HepG2 (cell line): ENCODE measurements at regions of chr3 and their contacts with region 1.

Region 1: DNA sequence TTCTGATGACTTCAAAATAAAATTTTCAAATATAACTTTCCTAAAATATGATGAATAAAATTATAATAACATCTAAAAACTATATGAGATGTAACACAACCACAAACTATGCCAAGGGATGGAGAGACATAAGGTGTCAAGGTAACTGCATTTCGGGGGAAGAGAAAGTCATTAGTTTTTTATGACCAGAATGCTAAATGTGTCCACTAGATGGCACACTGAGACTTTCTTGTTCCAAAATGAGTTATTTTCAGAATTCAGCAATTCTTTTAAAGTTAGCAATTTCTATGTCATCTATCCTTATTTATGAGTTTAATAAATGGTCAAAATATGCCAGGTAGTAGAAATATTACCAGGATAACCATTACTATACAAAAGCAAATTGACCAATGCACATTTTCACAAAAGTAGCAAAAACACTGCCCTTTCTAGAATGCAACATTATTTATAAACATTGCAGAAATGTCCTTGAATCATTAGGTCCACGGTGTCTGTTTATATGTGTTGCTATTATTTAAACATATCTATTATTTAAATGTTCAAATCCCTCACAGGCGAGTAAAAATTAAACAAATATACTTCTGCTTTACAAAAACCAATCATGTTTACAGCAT is 374.2 kb downstream of the PLCL2 start:
- DNase-seq: peak; percentile 14
- ATAC-seq: no peak
- H3K4me3 ChIP-seq: no peak overlapping the region
- H3K27ac ChIP-seq: no peak overlapping the region
- H3K4me1 ChIP-seq: no peaks in the 10 kb centered on the region
- H3K27me3 ChIP-seq: no peaks in the 10 kb centered on the region; a peak in 1 of 5 replicates
- CTCF ChIP-seq: peak; percentile 68
- EP300 ChIP-seq: no peak
- POLR2A ChIP-seq: no peak
- RAD21 ChIP-seq: 0 out of 2 replicates have a peak, but pooled peaks have one; percentile 14

Region 2: DNA sequence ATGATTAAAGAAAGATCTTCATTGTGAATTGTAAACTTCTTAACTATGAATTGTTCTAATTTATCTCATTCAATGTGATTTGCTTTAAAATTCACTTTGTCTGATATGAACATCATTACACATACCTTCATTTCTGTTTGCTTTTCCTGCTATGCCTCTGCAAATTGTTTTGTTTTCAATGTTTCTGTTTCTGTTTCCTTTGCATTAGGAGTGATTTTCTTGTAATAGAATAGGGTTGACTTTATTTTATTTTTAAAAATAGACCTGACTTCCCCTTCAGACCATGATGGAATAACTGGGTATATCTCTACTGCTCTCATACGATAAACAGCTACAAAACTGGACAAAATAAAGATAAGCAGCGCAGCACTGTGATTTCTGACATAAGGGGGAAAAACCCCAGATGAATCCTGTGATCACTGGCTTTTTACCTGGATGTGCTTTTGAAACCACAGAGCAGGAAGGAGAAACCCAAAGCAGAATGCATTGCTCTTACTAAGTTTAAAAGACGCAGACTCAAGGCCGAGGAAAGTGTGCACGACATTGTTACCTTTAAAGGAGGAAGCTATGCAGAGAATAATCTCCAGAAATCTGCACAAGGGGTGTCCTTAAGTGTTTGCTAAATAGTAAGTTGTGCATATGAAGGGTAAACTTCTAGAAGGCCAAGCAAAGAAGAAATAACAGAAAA is 63.3 kb after region 1 on chr3:
- CTCF ChIA-PET with region 1: no interaction called
- POLR2A ChIA-PET with region 1: no interaction called
- in situ Hi-C with region 1: no loop called
- intact Hi-C with region 1: loop called (anchors 1 kb)
- DNase-seq: no peak
- ATAC-seq: no peak
- H3K4me3 ChIP-seq: no peak overlapping the region
- H3K27ac ChIP-seq: no peak overlapping the region
- H3K4me1 ChIP-seq: no peaks in the 10 kb centered on the region
- H3K27me3 ChIP-seq: no peaks in the 10 kb centered on the region
- CTCF ChIP-seq: no peak
- EP300 ChIP-seq: no peak
- POLR2A ChIP-seq: no peak
- RAD21 ChIP-seq: no peak

Region 3: DNA sequence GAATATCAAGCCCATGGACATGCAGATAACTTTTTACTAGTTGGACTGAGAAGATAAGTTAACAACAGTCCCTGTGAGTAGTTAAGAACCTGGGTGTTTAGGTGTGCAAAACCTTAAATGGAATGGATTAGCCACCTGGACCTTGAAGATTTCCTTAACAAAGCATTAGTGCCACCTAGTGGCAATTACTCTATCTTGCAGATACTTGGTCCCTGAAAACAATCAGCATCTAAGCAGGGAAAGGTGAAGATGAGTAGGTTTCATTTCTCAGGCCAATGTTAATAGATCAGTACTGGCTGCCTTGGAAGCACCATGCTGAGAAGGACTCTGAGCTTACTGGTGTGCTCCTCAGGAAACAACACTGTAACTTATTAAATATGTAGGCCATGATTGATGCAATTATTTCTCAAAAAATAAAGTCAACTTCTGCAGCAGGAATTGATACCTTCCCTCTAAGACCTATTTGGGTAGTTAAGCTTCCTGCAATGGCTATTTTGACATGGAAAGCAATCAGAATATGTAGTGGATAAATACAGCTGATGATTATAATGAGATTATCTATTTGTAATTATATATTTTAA is 154.1 kb after region 1 on chr3:
- CTCF ChIA-PET with region 1: interaction called, 14 read pairs
- POLR2A ChIA-PET with region 1: no interaction called
- in situ Hi-C with region 1: loop called (anchors 5 kb)
- intact Hi-C with region 1: loop called (anchors 1 kb)
- DNase-seq: peak; percentile 64
- ATAC-seq: peak; percentile 82
- H3K4me3 ChIP-seq: no peak overlapping the region
- H3K27ac ChIP-seq: no peak overlapping the region
- H3K4me1 ChIP-seq: no peaks in the 10 kb centered on the region
- H3K27me3 ChIP-seq: no peaks in the 10 kb centered on the region
- CTCF ChIP-seq: peak; percentile 84
- EP300 ChIP-seq: no peak
- POLR2A ChIP-seq: no peak
- RAD21 ChIP-seq: peak; percentile 62

Region 4: DNA sequence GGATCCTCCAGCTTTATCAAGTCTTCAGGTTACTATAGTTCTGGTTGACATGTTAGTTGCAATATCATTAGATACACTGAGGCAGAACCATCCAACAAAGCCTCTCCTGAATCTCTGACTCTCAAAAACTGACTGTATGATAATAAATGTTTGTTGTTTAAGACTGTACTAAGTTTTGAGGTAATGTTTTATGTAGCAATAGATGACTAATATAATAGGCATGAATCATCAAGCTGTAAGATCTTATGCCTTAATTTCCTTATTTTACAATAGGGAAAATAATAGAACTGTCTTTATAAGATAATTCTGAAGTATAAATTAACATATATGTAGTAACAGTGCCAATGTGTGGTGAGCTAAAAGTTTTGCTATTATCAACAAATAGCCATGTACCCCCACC is 572.4 kb after region 1 on chr3:
- CTCF ChIA-PET with region 1: no interaction called
- POLR2A ChIA-PET with region 1: no interaction called
- in situ Hi-C with region 1: loop called (anchors 10 kb)
- intact Hi-C with region 1: no loop called
- DNase-seq: no peak
- ATAC-seq: no peak
- H3K4me3 ChIP-seq: no peak overlapping the region
- H3K27ac ChIP-seq: no peak overlapping the region
- H3K4me1 ChIP-seq: no peaks in the 10 kb centered on the region
- H3K27me3 ChIP-seq: 0 out of 5 replicates have a peak, but pooled peaks cover 0 to 2% of the 10 kb centered on the region in 2 experiments
- CTCF ChIP-seq: no peak
- EP300 ChIP-seq: no peak
- POLR2A ChIP-seq: no peak
- RAD21 ChIP-seq: no peak

Region 5: DNA sequence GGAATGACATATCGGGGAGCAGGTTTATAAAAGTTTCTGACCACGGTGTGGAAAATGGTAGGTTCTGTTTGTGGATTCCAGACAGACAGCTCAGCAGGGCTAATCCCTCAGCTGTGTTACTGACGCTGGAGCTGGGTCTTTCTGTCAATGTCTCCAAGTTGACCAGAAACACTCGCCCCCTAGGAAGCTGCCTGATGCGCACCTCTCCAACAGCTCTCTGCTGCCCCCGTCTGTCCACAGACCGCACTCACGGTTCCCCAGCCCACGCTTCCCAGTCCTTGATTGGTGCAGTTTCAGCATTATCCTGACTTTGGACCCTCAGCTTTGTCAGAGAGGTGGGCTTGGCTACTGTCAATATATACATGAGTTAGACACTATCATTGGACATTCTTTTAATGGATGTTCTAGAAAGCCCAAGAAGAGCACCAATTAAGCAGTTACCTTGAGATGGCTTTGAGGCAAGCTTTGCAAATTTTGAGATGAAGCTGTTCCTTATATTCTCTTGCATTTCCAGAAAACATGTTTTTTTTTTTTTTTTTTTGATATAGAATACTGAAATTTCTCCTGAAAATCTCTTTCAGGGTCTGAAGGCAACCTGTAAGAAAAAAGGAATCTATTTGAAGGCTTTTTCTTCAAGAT is 582.4 kb after region 1 on chr3:
- CTCF ChIA-PET with region 1: no interaction called
- POLR2A ChIA-PET with region 1: no interaction called
- in situ Hi-C with region 1: loop called (anchors 10 kb)
- intact Hi-C with region 1: loop called (anchors 5 kb)
- DNase-seq: peak; percentile 57
- ATAC-seq: peak; percentile 99
- H3K4me3 ChIP-seq: no peak overlapping the region
- H3K27ac ChIP-seq: no peak overlapping the region
- H3K4me1 ChIP-seq: no peaks in the 10 kb centered on the region
- H3K27me3 ChIP-seq: no peaks in the 10 kb centered on the region
- CTCF ChIP-seq: peak; percentile 96
- EP300 ChIP-seq: no peak
- POLR2A ChIP-seq: no peak
- RAD21 ChIP-seq: peak; percentile 90

Region 6: DNA sequence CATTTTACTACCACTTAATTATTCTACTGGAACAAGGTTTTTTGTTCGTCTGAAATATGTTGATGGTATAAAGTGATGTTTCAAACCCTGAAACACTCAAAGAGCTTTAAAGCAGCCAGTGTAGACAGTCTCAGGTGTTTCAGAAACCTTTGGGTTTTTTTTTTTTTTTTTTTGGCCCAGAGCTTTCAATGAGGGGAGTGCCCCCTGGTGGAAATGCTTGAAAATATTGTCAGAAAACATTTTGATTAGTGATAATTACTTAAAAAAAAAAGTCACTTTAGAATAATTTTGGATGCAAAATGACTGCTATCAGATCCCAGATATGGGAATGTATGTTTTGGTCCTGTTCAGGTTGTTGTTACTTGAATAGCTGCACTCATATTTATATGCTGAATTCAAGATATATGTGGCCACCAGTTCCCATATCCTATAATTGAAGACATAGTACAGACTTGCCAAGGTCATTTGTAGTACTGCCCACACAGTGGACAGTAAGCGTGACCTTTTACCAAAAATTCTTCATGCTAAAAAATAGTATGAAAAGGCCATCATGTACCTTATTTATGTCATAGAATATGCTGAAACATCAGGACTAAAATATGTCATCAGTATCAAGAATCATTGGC is 1130.3 kb after region 1 on chr3:
- CTCF ChIA-PET with region 1: no interaction called
- POLR2A ChIA-PET with region 1: no interaction called
- in situ Hi-C with region 1: loop called (anchors 25 kb)
- intact Hi-C with region 1: no loop called
- DNase-seq: peak; percentile 3
- ATAC-seq: no peak
- H3K4me3 ChIP-seq: no peak overlapping the region
- H3K27ac ChIP-seq: no peak overlapping the region
- H3K4me1 ChIP-seq: no peaks in the 10 kb centered on the region
- H3K27me3 ChIP-seq: 0 out of 5 replicates have a peak, but pooled peaks cover 0 to 4% of the 10 kb centered on the region in 2 experiments
- CTCF ChIP-seq: peak; percentile 27
- EP300 ChIP-seq: no peak
- POLR2A ChIP-seq: no peak
- RAD21 ChIP-seq: no peak